Calu3 (cell line): ENCODE measurements at regions of chr6 and their contacts with region 1.

Region 1: DNA sequence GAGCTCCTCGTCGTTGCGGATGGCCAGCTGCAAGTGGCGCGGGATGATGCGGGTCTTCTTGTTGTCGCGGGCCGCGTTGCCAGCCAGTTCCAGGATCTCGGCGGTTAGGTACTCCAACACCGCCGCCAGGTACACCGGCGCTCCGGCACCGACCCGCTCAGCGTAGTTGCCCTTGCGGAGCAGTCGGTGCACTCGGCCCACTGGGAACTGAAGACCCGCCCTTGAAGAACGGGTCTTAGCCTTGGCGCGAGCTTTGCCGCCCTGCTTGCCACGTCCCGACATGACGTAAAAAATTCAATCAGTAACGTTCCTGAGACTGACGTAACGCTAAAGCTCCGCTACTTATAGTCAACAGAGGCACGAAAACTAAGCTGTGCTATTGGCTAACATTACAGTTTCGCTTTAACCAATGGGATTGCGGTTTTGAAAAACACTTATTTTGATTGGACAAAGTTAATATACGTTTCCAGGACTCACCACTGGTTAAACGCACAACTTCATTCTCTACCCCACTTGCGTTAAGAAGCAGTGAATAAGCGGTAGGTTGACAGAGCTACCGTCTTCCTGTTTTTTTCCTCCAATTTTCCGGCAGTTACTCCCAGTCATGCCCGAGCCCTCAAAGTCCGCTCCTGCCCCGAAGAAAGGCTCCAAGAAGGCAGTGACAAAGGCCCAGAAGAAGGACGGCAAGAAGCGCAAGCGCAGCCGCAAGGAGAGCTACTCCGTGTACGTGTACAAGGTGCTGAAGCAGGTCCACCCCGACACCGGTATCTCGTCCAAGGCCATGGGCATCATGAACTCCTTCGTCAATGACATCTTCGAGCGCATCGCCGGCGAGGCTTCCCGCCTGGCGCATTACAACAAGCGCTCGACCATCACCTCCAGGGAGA is 73.9 kb downstream of the OR2B2 start:
- DNase-seq: peak; percentile 86
- H3K4me3 Mint-ChIP-seq: no peak overlapping the region
- H3K27ac Mint-ChIP-seq: no peak overlapping the region
- H3K4me1 Mint-ChIP-seq: peaks cover 17% of the 10 kb centered on the region
- H3K27me3 Mint-ChIP-seq: no peaks in the 10 kb centered on the region
- CTCF ChIP-seq: no peak

Region 2: DNA sequence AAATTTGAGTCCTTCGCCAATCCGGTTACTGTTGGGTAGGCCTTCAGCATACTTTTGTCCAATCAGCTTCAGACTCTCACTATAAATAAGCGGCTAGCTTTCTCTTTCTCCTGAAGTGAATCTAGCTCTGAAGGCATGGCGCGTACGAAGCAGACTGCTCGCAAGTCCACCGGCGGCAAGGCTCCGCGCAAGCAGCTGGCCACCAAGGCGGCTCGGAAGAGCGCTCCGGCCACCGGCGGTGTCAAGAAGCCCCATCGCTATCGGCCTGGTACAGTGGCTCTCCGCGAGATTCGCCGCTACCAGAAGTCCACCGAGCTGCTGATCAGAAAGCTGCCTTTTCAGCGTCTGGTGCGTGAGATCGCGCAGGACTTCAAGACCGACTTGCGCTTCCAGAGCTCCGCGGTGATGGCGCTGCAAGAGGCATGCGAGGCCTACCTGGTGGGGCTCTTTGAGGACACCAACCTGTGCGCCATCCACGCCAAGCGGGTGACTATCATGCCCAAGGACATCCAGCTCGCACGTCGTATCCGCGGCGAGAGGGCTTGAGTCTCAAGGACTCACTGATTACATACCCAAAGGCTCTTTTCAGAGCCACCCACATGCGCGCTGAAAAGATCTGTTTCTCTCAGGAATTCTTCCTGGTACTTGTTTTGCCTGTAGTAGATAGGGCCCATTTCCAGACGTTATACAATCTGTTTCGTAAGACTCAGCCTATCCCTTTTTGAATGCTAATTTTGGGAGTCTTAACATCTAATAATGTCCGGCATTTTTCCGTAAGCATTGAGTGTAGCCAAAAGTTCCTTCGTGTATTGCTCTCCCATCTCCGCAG is 28.1 kb before region 1 on chr6:
- CTCF ChIA-PET with region 1: interaction called, 10 read pairs
- intact Hi-C with region 1: no loop called
- DNase-seq: peak; percentile 87
- H3K4me3 Mint-ChIP-seq: peak overlapping the region; percentile 89
- H3K27ac Mint-ChIP-seq: peak overlapping the region; percentile 99
- H3K4me1 Mint-ChIP-seq: peaks cover 22% of the 10 kb centered on the region
- H3K27me3 Mint-ChIP-seq: no peaks in the 10 kb centered on the region
- CTCF ChIP-seq: no peak

Region 3: GRCh38 chr6:27864906-27865849 is 26.9 kb after region 1 on chr6:
- CTCF ChIA-PET with region 1: interaction called, 33 read pairs
- intact Hi-C with region 1: loop called (anchors 2 kb)
- DNase-seq: peak; percentile 76
- H3K4me3 Mint-ChIP-seq: peak overlapping the region; percentile 92
- H3K27ac Mint-ChIP-seq: peak overlapping the region; percentile 80
- H3K4me1 Mint-ChIP-seq: peaks cover 23% of the 10 kb centered on the region
- H3K27me3 Mint-ChIP-seq: no peaks in the 10 kb centered on the region
- CTCF ChIP-seq: no peak